ENCODE measurements at regions of chr13 and their contacts with region 1.

Region 1: DNA sequence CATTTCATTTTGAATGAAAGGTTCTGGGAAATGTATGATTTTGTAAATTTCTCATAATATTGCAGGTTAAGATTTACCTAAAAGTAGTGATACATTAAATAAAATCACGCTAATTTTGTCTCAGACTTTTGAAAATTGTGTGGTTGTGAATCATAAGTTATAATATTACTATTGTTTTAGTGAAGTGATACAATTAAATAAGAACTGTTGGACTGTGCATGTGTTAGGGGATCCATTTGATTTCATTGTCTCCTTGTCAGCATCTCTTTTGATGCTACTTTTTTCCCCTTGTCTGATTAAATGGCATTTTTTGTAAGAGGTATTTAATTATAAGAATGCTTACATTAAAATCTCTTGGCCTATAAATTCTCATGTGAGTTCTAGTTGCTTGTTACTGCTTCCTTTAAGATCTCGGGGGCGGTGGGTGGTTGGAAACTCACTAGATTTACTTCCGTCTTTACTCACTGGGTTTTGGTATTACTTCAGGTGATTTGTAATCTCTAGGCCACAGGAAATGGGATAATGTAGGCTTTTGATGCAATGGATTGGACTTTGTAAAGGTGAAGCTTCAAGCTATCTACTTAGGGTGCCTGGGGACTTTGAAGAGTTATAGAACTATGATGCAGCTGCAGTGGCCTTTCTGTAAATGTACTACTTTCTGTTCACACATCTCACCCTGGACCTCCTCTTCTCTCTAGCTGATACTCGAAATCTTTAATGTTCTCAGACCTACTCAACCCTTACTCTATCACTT is 66.5 kb downstream of the PAN3 start:
- DNase-seq: peak; percentile 77
- H3K4me3 Mint-ChIP-seq: no peak overlapping the region
- H3K27ac Mint-ChIP-seq: no peak overlapping the region
- H3K4me1 Mint-ChIP-seq: peaks cover 32% of the 10 kb centered on the region
- H3K27me3 Mint-ChIP-seq: no peaks in the 10 kb centered on the region

Region 2: DNA sequence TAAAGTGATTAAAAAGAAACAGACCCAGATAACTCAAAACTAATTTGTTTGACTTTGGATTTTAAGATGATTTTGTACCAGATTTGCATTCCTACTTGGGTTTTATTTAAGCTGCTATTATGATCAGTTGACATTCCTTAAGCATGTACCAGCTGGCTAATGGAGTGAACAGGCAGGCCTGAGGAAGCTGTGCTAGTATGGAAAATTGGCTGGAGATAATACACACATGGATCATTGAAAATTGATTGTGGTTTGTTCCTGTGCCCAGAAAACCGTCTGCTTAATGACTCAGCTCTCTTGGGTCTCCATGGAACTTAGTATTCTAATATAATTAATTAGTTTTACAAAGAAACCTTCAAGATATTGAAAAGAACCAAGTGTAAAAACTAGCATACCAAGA is 560.6 kb before region 1 on chr13:
- CTCF ChIA-PET with region 1: no interaction called
- POLR2A ChIA-PET with region 1: no interaction called
- intact Hi-C with region 1: no loop called
- DNase-seq: no peak
- H3K4me3 Mint-ChIP-seq: no peak overlapping the region
- H3K27ac Mint-ChIP-seq: peak overlapping the region; percentile 16
- H3K4me1 Mint-ChIP-seq: peaks cover 27% of the 10 kb centered on the region
- H3K27me3 Mint-ChIP-seq: no peaks in the 10 kb centered on the region

Region 3: DNA sequence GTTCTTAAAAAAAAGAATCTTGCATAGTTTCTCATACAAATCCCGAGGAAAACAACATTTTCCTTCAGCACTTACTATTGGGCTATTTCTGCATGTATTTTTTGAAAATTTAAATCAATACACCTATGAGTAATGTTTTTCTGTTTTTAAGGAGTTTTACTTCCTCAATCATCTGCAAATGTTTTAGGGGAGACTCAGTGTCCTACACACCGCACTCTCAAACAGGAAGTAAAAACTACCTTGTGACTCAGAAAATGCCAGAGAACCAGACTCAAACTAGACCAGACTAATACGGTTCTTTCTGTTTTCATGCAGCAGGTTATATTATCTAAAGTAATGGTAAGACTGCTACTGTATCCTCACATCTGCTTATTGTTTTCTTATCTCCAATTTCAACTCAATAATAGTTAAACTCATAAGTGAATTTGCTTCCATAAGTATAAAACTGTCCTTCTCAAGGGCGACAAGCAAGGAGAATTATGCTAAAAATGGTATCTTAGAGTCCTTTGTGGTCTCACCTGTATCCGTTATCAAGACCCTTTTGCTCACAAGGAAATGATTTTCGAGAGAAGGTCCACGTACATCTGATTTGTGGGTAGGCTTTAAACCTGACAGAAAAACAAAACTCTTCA is 157.0 kb before region 1 on chr13:
- CTCF ChIA-PET with region 1: no interaction called
- POLR2A ChIA-PET with region 1: no interaction called
- intact Hi-C with region 1: loop called (anchors 10 kb)
- DNase-seq: no peak
- H3K4me3 Mint-ChIP-seq: no peak overlapping the region
- H3K27ac Mint-ChIP-seq: no peak overlapping the region
- H3K4me1 Mint-ChIP-seq: peaks cover 20% of the 10 kb centered on the region
- H3K27me3 Mint-ChIP-seq: peaks cover 2% of the 10 kb centered on the region

Region 4: GRCh38 chr13:28117689-28118377 is 87.0 kb before region 1 on chr13:
- CTCF ChIA-PET with region 1: no interaction called
- POLR2A ChIA-PET with region 1: no interaction called
- intact Hi-C with region 1: no loop called
- DNase-seq: no peak
- H3K4me3 Mint-ChIP-seq: no peak overlapping the region
- H3K27ac Mint-ChIP-seq: no peak overlapping the region
- H3K4me1 Mint-ChIP-seq: peaks cover 13% of the 10 kb centered on the region
- H3K27me3 Mint-ChIP-seq: peaks cover 4% of the 10 kb centered on the region

Region 5: DNA sequence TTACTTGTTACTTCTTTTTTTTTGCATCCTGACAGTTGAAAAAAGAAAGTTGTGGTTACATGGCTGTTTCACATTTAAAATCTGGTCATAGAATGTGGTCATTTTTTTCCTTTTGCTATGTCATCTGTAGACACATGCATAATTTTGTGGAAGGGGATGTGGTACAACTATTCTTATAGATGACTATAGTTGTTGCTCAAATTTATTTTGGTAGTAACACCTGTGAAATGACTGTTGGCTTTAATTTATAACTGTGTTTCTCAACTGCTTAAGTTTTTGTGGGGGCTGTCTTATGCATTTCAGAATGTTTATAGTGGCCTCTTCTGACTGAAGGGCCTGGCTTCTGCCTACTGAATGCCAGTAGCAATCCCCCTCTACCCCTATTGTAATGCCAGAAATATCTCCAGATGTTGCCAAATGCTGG is 63.9 kb after region 1 on chr13:
- CTCF ChIA-PET with region 1: no interaction called
- POLR2A ChIA-PET with region 1: no interaction called
- intact Hi-C with region 1: loop called (anchors 1 kb)
- DNase-seq: no peak
- H3K4me3 Mint-ChIP-seq: no peak overlapping the region
- H3K27ac Mint-ChIP-seq: peak overlapping the region; percentile 13
- H3K4me1 Mint-ChIP-seq: peaks cover 10% of the 10 kb centered on the region
- H3K27me3 Mint-ChIP-seq: no peaks in the 10 kb centered on the region